Activated CD4-positive, alpha-beta memory T cell treated with anti-CD3 and anti-CD28 coated beads for 36 hours (primary cell): ENCODE measurements at regions of chr20 and their contacts with region 1.

Region 1: GRCh38 chr20:5844063-5844681 is 94.0 kb downstream of the SHLD1 start:
- DNase-seq: peak; percentile 87
- H3K4me3 Mint-ChIP-seq: peak overlapping the region; percentile 53
- H3K27ac Mint-ChIP-seq: peak overlapping the region; percentile 79
- H3K4me1 Mint-ChIP-seq: peaks cover 67% of the 10 kb centered on the region
- H3K27me3 Mint-ChIP-seq: no peaks in the 10 kb centered on the region

Region 2: GRCh38 chr20:5674176-5674660 is 170.0 kb before region 1 on chr20:
- CTCF ChIA-PET with region 1: no interaction called
- POLR2A ChIA-PET with region 1: no interaction called
- intact Hi-C with region 1: loop called (anchors 1 kb)
- DNase-seq: peak; percentile 49
- H3K4me3 Mint-ChIP-seq: no peak overlapping the region
- H3K27ac Mint-ChIP-seq: peak overlapping the region; percentile 80
- H3K4me1 Mint-ChIP-seq: peaks cover 13% of the 10 kb centered on the region
- H3K27me3 Mint-ChIP-seq: no peaks in the 10 kb centered on the region

Region 3: DNA sequence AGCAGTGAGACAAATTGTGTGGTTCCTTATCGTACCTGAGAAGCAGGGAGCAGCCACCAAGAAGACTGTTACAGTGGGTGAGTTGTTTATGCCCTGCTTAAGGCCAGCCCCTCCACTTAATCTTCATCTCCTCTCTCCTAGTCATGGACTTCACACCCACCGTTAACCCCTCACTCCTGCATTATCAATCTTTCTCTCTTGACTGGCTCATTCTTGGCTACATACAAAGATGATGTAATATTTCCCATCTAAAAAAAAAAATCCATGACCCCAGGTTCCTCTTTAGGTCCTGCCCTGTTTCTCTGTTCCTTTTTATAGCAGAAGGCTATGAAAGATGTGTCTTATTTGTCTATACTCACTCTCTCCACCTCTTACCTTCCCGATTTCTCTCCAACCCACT is 21.6 kb before region 1 on chr20:
- CTCF ChIA-PET with region 1: interaction called, 3 read pairs
- POLR2A ChIA-PET with region 1: no interaction called
- intact Hi-C with region 1: loop called (anchors 2 kb)
- DNase-seq: no peak
- H3K4me3 Mint-ChIP-seq: no peak overlapping the region
- H3K27ac Mint-ChIP-seq: no peak overlapping the region
- H3K4me1 Mint-ChIP-seq: peaks cover 21% of the 10 kb centered on the region
- H3K27me3 Mint-ChIP-seq: no peaks in the 10 kb centered on the region

Region 4: GRCh38 chr20:5918856-5919625 is 74.9 kb after region 1 on chr20:
- CTCF ChIA-PET with region 1: no interaction called
- POLR2A ChIA-PET with region 1: interaction called, 5 read pairs
- intact Hi-C with region 1: loop called (anchors 2 kb)
- DNase-seq: peak; percentile 30
- H3K4me3 Mint-ChIP-seq: no peak overlapping the region
- H3K27ac Mint-ChIP-seq: peak overlapping the region; percentile 19
- H3K4me1 Mint-ChIP-seq: peaks cover 20% of the 10 kb centered on the region
- H3K27me3 Mint-ChIP-seq: peaks cover 2% of the 10 kb centered on the region

Region 5: GRCh38 chr20:6058684-6059295 is 214.6 kb after region 1 on chr20:
- CTCF ChIA-PET with region 1: no interaction called
- POLR2A ChIA-PET with region 1: no interaction called
- intact Hi-C with region 1: no loop called
- DNase-seq: no peak
- H3K4me3 Mint-ChIP-seq: no peak overlapping the region
- H3K27ac Mint-ChIP-seq: no peak overlapping the region
- H3K4me1 Mint-ChIP-seq: no peaks in the 10 kb centered on the region
- H3K27me3 Mint-ChIP-seq: peaks cover 3% of the 10 kb centered on the region